ENCODE measurements at regions of chr15 and their contacts with region 1.

Region 1: GRCh38 chr15:72231066-72231846 is at the start of gene PKM:
- DNase-seq: peak; percentile 97
- ATAC-seq: peak; percentile 59
- H3K4me3 Mint-ChIP-seq: peak within 1 kb of the TSS; percentile 88
- H3K27ac Mint-ChIP-seq: peak within 1 kb of the TSS; percentile 96
- H3K4me1 Mint-ChIP-seq: peaks cover 33% of the 10 kb centered on the region
- H3K27me3 Mint-ChIP-seq: no peaks in the 10 kb centered on the region
- total RNA-seq, gene PKM: 1,272 to 1,311 TPM

Region 2: GRCh38 chr15:72199711-72200212 is 31.5 kb before region 1 on chr15:
- CTCF ChIA-PET with region 1: interaction called, 39 read pairs
- POLR2A ChIA-PET with region 1: interaction called, 8 read pairs
- DNase-seq: peak; percentile 80
- ATAC-seq: peak; percentile 77
- H3K4me3 Mint-ChIP-seq: no peak overlapping the region
- H3K27ac Mint-ChIP-seq: peak overlapping the region; percentile 49
- H3K4me1 Mint-ChIP-seq: peaks cover 19% of the 10 kb centered on the region
- H3K27me3 Mint-ChIP-seq: peaks cover 14% of the 10 kb centered on the region

Region 3: GRCh38 chr15:72206677-72207000 is 24.6 kb before region 1 on chr15:
- CTCF ChIA-PET with region 1: interaction called, 39 read pairs
- POLR2A ChIA-PET with region 1: interaction called, 4 read pairs
- DNase-seq: no peak
- ATAC-seq: no peak
- H3K4me3 Mint-ChIP-seq: no peak overlapping the region
- H3K27ac Mint-ChIP-seq: no peak overlapping the region
- H3K4me1 Mint-ChIP-seq: peaks cover 14% of the 10 kb centered on the region
- H3K27me3 Mint-ChIP-seq: no peaks in the 10 kb centered on the region

Region 4: GRCh38 chr15:72217216-72217615 is 14.0 kb before region 1 on chr15:
- CTCF ChIA-PET with region 1: interaction called, 29 read pairs
- POLR2A ChIA-PET with region 1: interaction called, 10 read pairs
- DNase-seq: no peak
- ATAC-seq: no peak
- H3K4me3 Mint-ChIP-seq: no peak overlapping the region
- H3K27ac Mint-ChIP-seq: no peak overlapping the region
- H3K4me1 Mint-ChIP-seq: peaks cover 22% of the 10 kb centered on the region
- H3K27me3 Mint-ChIP-seq: no peaks in the 10 kb centered on the region

Region 5: GRCh38 chr15:72272213-72273002 is 41.2 kb after region 1 on chr15 and contains the start of gene PARP6:
- CTCF ChIA-PET with region 1: interaction called, 17 read pairs
- POLR2A ChIA-PET with region 1: interaction called, 13 read pairs
- DNase-seq: peak; percentile 97
- ATAC-seq: peak; percentile 99
- H3K4me3 Mint-ChIP-seq: peak within 1 kb of the TSS; percentile 88
- H3K27ac Mint-ChIP-seq: peak within 1 kb of the TSS; percentile 82
- H3K4me1 Mint-ChIP-seq: peaks cover 34% of the 10 kb centered on the region
- H3K27me3 Mint-ChIP-seq: peaks cover 2% of the 10 kb centered on the region
- total RNA-seq, gene PARP6: 54.0 to 57.0 TPM

Region 6: GRCh38 chr15:72375847-72376581 is 144.8 kb after region 1 on chr15 and contains the start of gene HEXA:
- CTCF ChIA-PET with region 1: interaction called, 9 read pairs
- POLR2A ChIA-PET with region 1: interaction called, 14 read pairs
- DNase-seq: peak; percentile 98
- ATAC-seq: peak; percentile 86
- H3K4me3 Mint-ChIP-seq: peak within 1 kb of the TSS; percentile 90
- H3K27ac Mint-ChIP-seq: peak within 1 kb of the TSS; percentile 98
- H3K4me1 Mint-ChIP-seq: peaks cover 40% of the 10 kb centered on the region
- H3K27me3 Mint-ChIP-seq: no peaks in the 10 kb centered on the region
- total RNA-seq, gene HEXA: 80.9 to 87.3 TPM

Region 7: GRCh38 chr15:72503147-72503546 is 271.9 kb after region 1 on chr15:
- CTCF ChIA-PET with region 1: no interaction called
- POLR2A ChIA-PET with region 1: no interaction called
- DNase-seq: no peak
- ATAC-seq: no peak
- H3K4me3 Mint-ChIP-seq: no peak overlapping the region
- H3K27ac Mint-ChIP-seq: no peak overlapping the region
- H3K4me1 Mint-ChIP-seq: peaks cover 30% of the 10 kb centered on the region
- H3K27me3 Mint-ChIP-seq: no peaks in the 10 kb centered on the region

Measured in activated CD8-positive, alpha-beta T cell treated with anti-CD3 and anti-CD28 coated beads, Interleukin-2, amount 10 ng/mL, durations not matched to agents 7 days and 5 days (primary cell).